T-cell (primary cell): ENCODE measurements at regions of chr5 and their contacts with region 1.

Region 1: GRCh38 chr5:170338933-170339779 is 41.6 kb upstream of the LCP2 start:
- DNase-seq: peak; percentile 28 to 86 (median 55)
- ATAC-seq: peak; percentile 78 to 86 (median 81)
- H3K4me3 ChIP-seq: no peak overlapping the region
- H3K4me3 Mint-ChIP-seq: no peak overlapping the region
- H3K27ac ChIP-seq: peak overlapping the region; percentile 11
- H3K27ac Mint-ChIP-seq: peak overlapping the region; percentile 70 to 87
- H3K4me1 ChIP-seq: peaks cover 39 to 50% of the 10 kb centered on the region in 2 experiments
- H3K4me1 Mint-ChIP-seq: peaks cover 37 to 41% (median 38%) of the 10 kb centered on the region in 3 donors
- H3K27me3 ChIP-seq: no peaks in the 10 kb centered on the region
- H3K27me3 Mint-ChIP-seq: no peaks in the 10 kb centered on the region

Region 2: GRCh38 chr5:170267431-170268152 is 71.6 kb before region 1 on chr5:
- CTCF ChIA-PET with region 1: interaction called, 26 to 60 read pairs
- POLR2A ChIA-PET with region 1: interaction called in 1 of 2 experiments, 9 read pairs
- DNase-seq: peak; percentile 52 to 93 (median 78)
- ATAC-seq: peak; percentile 59 to 76 (median 65)
- H3K4me3 ChIP-seq: no peak overlapping the region
- H3K4me3 Mint-ChIP-seq: peak overlapping the region; percentile 58 to 77 (median 62)
- H3K27ac ChIP-seq: peak overlapping the region; percentile 80
- H3K27ac Mint-ChIP-seq: peak overlapping the region; percentile 91 to 95
- H3K4me1 ChIP-seq: peaks cover 68 to 82% of the 10 kb centered on the region in 2 experiments
- H3K4me1 Mint-ChIP-seq: peaks cover 88 to 96% (median 95%) of the 10 kb centered on the region in 3 donors
- H3K27me3 ChIP-seq: no peaks in the 10 kb centered on the region
- H3K27me3 Mint-ChIP-seq: no peaks in the 10 kb centered on the region

Region 3: DNA sequence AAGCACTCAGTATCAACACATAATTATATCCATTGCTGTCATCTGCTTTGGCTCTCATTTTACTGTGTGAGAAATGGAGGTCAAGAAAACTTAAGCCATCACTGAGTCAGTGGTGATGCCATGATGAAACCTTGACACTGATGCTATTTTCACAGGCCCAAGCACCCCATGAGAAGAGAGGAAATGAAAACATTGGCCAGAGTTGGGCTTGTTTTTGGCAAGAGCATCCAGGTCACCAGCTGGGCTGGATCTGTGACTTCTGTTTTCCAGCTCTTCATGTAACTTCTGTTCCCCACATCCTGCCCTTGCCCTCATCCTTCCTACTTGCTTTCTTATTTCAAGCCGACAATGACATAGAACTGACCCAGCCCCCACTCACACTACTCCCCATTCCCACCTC is 51.6 kb before region 1 on chr5:
- CTCF ChIA-PET with region 1: interaction called, 8 to 10 read pairs
- POLR2A ChIA-PET with region 1: no interaction called
- DNase-seq: no peak
- ATAC-seq: peak in 2 of 4 experiments; percentile 18 to 22
- H3K4me3 ChIP-seq: no peak overlapping the region
- H3K4me3 Mint-ChIP-seq: peak overlapping the region; percentile 32 to 99 (median 52)
- H3K27ac ChIP-seq: peak overlapping the region; percentile 88
- H3K27ac Mint-ChIP-seq: peak overlapping the region; percentile 95 to 99
- H3K4me1 ChIP-seq: peaks cover 87 to 93% of the 10 kb centered on the region in 2 experiments
- H3K4me1 Mint-ChIP-seq: peaks cover 100% of the 10 kb centered on the region in 3 donors
- H3K27me3 ChIP-seq: no peaks in the 10 kb centered on the region
- H3K27me3 Mint-ChIP-seq: no peaks in the 10 kb centered on the region

Region 4: DNA sequence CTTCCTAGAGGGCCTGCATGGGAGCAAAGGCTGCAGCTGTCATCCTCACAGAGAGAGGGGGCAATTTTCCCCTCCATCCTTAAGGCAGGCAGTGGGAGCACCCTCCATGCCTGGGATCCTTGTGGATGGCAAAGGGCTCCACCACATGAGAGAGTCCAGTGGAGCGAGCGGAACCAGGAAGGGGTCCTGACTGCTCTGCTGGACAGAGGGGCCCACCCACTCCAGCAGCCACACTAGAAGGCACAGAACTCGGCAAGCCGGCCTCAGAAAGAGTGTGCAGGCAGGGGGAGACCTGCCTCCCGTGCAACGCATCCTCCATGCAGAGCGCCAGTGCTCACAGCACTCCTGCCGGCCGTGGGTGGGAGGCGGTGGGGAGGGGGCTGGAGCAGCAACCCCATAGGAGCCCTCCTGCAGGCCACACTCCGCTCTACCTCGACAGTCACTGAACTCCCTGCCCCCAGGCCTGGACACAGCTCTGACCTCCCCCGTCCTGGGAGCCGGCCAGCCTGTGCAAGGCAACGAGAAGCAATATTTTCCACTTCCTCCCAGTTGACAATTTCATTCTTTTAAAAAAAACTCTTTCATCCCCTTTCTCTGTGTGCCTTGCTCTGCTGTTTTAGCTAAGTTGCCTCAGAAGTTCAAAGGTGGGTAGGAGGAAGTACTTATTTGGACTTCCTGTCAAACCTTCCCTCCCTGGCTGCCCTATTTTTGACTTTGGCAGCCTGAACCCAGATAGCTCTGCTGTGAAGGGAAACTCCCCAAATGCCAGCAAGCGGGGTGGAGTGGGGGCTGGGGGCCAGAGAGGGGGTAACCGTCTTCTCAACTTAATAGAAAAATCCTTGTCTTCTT is 36.3 kb before region 1 on chr5:
- CTCF ChIA-PET with region 1: interaction called, 9 to 26 read pairs
- POLR2A ChIA-PET with region 1: interaction called, 4 to 7 read pairs
- DNase-seq: peak; percentile 43 to 96 (median 69)
- ATAC-seq: peak; percentile 91 to 98 (median 96)
- H3K4me3 ChIP-seq: peak overlapping the region; percentile 48 to 73
- H3K4me3 Mint-ChIP-seq: peak overlapping the region; percentile 78 to 99 (median 82)
- H3K27ac ChIP-seq: peak overlapping the region; percentile 95
- H3K27ac Mint-ChIP-seq: peak overlapping the region; percentile 98 to 99
- H3K4me1 ChIP-seq: peaks cover 62 to 69% of the 10 kb centered on the region in 2 experiments
- H3K4me1 Mint-ChIP-seq: peaks cover 79 to 90% (median 88%) of the 10 kb centered on the region in 3 donors
- H3K27me3 ChIP-seq: no peaks in the 10 kb centered on the region
- H3K27me3 Mint-ChIP-seq: no peaks in the 10 kb centered on the region

Region 5: GRCh38 chr5:170383227-170383626 is 44.1 kb after region 1 on chr5:
- CTCF ChIA-PET with region 1: interaction called in 1 of 2 experiments, 10 read pairs
- POLR2A ChIA-PET with region 1: no interaction called
- DNase-seq: no peak
- ATAC-seq: no peak
- H3K4me3 ChIP-seq: no peak overlapping the region
- H3K4me3 Mint-ChIP-seq: no peak overlapping the region
- H3K27ac ChIP-seq: no peak overlapping the region
- H3K27ac Mint-ChIP-seq: no peak overlapping the region
- H3K4me1 ChIP-seq: no peaks in the 10 kb centered on the region
- H3K4me1 Mint-ChIP-seq: peaks cover 0 to 3% (median 0%) of the 10 kb centered on the region in 3 donors
- H3K27me3 ChIP-seq: peaks cover 0 to 27% of the 10 kb centered on the region in 2 experiments
- H3K27me3 Mint-ChIP-seq: peaks cover 6 to 16% of the 10 kb centered on the region in 2 donors